Activated CD4-positive, alpha-beta T cell treated with anti-CD3 and anti-CD28 coated beads for 36 hours (primary cell): ENCODE measurements at regions of chr11 and their contacts with region 1.

Region 1: GRCh38 chr11:6757373-6757967 is 14.3 kb downstream of the OR2AG2 start:
- DNase-seq: peak; percentile 76
- ATAC-seq: peak; percentile 85
- H3K4me3 Mint-ChIP-seq: no peak overlapping the region
- H3K27ac Mint-ChIP-seq: no peak overlapping the region
- H3K4me1 Mint-ChIP-seq: peaks cover 10% of the 10 kb centered on the region
- H3K27me3 Mint-ChIP-seq: no peaks in the 10 kb centered on the region

Region 2: DNA sequence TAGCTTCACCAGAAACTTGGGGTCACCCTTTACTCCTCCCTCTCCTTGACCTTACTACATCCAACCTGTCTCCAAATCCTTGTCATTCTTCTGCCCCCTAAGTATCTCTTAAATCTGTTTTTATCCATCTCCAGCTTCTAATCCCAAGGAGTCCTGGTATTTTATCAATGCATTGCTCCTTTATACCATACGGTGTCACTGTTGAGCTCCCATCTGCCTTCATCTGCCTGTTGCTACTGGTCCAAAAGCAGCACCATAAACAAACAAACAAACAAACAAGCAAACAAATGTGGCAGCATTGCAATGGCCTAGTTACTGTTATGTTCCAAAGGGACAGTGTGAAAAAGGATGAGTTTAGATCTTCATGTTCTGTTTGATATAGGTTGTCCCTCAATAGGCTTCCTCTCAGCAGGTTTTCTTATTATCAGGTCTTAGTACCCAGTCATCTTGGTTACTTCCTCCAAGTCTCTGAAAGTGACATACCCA is 226.2 kb before region 1 on chr11:
- CTCF ChIA-PET with region 1: interaction called, 7 read pairs
- POLR2A ChIA-PET with region 1: no interaction called
- intact Hi-C with region 1: loop called (anchors 1 kb)
- DNase-seq: peak; percentile 26
- ATAC-seq: peak; percentile 71
- H3K4me3 Mint-ChIP-seq: no peak overlapping the region
- H3K27ac Mint-ChIP-seq: no peak overlapping the region
- H3K4me1 Mint-ChIP-seq: peaks cover 11% of the 10 kb centered on the region
- H3K27me3 Mint-ChIP-seq: no peaks in the 10 kb centered on the region

Region 3: GRCh38 chr11:6719576-6719975 is 37.9 kb before region 1 on chr11:
- CTCF ChIA-PET with region 1: interaction called, 18 read pairs
- POLR2A ChIA-PET with region 1: interaction called, 4 read pairs
- intact Hi-C with region 1: no loop called
- DNase-seq: no peak
- ATAC-seq: no peak
- H3K4me3 Mint-ChIP-seq: no peak overlapping the region
- H3K27ac Mint-ChIP-seq: no peak overlapping the region
- H3K4me1 Mint-ChIP-seq: peaks cover 46% of the 10 kb centered on the region
- H3K27me3 Mint-ChIP-seq: no peaks in the 10 kb centered on the region

Region 4: GRCh38 chr11:6727971-6728760 is 29.3 kb before region 1 on chr11:
- CTCF ChIA-PET with region 1: interaction called, 20 read pairs
- POLR2A ChIA-PET with region 1: no interaction called
- intact Hi-C with region 1: no loop called
- DNase-seq: no peak
- ATAC-seq: no peak
- H3K4me3 Mint-ChIP-seq: no peak overlapping the region
- H3K27ac Mint-ChIP-seq: peak overlapping the region; percentile 75
- H3K4me1 Mint-ChIP-seq: peaks cover 67% of the 10 kb centered on the region
- H3K27me3 Mint-ChIP-seq: no peaks in the 10 kb centered on the region

Region 5: DNA sequence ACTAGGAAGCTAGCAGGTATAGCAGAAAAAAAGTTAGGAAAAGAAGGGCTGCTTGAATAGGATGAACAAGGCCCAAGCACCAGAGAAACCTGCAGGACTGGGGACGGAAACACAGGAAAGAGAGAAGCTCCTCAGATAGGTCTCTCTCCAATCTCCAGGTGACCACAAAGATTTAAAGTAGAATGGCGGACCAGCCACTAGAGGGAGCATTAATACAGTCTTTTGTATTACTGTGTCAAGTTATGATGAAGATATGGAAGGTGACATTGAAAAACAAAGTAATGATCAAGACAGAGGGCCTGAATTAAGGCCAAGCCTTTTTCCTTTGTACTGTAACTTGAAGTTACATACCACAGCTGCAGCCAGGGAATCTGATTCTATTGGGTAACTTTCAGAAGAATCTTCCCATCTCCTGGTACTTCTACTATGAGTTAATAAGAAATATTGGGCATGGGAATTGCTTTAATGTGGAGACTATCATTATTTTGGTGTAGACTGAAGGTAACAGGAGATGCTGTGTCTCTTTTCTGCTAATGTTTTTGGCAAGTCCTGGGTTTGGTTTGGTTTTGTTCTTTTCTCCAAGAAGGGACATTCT is 19.5 kb before region 1 on chr11:
- CTCF ChIA-PET with region 1: interaction called, 102 read pairs
- POLR2A ChIA-PET with region 1: no interaction called
- intact Hi-C with region 1: loop called (anchors 1 kb)
- DNase-seq: peak; percentile 76
- ATAC-seq: peak; percentile 52
- H3K4me3 Mint-ChIP-seq: no peak overlapping the region
- H3K27ac Mint-ChIP-seq: peak overlapping the region; percentile 73
- H3K4me1 Mint-ChIP-seq: peaks cover 94% of the 10 kb centered on the region
- H3K27me3 Mint-ChIP-seq: no peaks in the 10 kb centered on the region

Region 6: DNA sequence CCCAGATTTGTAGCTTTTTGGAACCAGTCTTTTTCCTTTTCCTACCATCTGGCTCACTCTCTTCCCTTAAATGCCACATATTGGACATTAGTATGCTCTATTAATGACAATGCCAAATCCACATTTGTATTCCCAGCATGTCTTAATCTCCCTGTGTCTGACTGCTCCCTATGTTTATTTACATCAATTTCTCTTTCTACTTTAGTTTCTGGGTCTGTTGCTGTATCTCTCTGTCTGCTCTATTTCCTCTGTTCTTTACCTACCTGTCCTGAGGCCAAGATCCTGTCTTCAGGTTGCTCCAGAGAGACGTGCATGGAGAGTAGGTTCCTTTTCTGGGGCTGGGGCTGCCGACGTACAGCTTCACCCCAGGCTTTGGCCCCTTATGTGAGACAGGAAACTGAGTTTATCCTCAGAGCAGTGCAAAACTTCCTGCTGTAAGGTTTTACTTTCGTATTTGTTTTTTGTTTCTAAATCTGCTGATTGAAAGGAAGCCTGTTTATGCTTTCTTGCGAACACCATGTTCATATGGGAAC is 11.3 kb before region 1 on chr11:
- CTCF ChIA-PET with region 1: interaction called, 84 read pairs
- POLR2A ChIA-PET with region 1: interaction called, 8 read pairs
- intact Hi-C with region 1: no loop called
- DNase-seq: peak; percentile 58
- ATAC-seq: peak; percentile 85
- H3K4me3 Mint-ChIP-seq: no peak overlapping the region
- H3K27ac Mint-ChIP-seq: no peak overlapping the region
- H3K4me1 Mint-ChIP-seq: peaks cover 30% of the 10 kb centered on the region
- H3K27me3 Mint-ChIP-seq: no peaks in the 10 kb centered on the region

Region 7: GRCh38 chr11:6794639-6795038 is 37.2 kb after region 1 on chr11:
- CTCF ChIA-PET with region 1: no interaction called
- POLR2A ChIA-PET with region 1: no interaction called
- intact Hi-C with region 1: no loop called
- DNase-seq: no peak
- ATAC-seq: no peak
- H3K4me3 Mint-ChIP-seq: no peak overlapping the region
- H3K27ac Mint-ChIP-seq: no peak overlapping the region
- H3K4me1 Mint-ChIP-seq: no peaks in the 10 kb centered on the region
- H3K27me3 Mint-ChIP-seq: peaks cover under 1% of the 10 kb centered on the region